ENCODE measurements at regions of chr6 and their contacts with region 1.

Region 1: GRCh38 chr6:99093791-99094190 is 146.0 kb upstream of the FBXL4 start:
- DNase-seq: no peak
- H3K4me3 ChIP-seq: no peak overlapping the region
- H3K4me3 Mint-ChIP-seq: no peak overlapping the region
- H3K27ac Mint-ChIP-seq: no peak overlapping the region
- H3K4me1 ChIP-seq: no peaks in the 10 kb centered on the region
- H3K4me1 Mint-ChIP-seq: no peaks in the 10 kb centered on the region
- H3K27me3 ChIP-seq: no peaks in the 10 kb centered on the region
- H3K27me3 Mint-ChIP-seq: peaks cover 25% of the 10 kb centered on the region
- CTCF ChIP-seq: no peak

Region 2: DNA sequence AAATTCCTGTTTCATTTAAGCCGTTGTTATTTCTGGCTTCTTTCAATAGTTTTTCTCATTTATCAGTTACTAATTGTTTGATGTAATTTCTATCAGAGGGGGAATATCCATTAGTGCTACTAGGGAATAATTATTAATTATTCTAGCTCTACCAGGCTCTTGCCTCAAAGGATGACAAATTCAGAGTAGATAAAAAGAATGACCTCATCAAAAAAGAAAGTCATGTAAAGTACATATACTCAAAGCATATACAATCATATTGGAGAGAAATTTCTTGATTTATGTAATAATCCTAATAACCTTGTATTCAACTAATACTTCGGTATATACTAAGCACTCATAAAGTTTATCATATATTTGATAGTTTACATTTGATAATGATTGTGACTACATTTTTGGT is 46.3 kb before region 1 on chr6:
- CTCF ChIA-PET with region 1: no interaction called
- POLR2A ChIA-PET with region 1: no interaction called
- intact Hi-C with region 1: loop called (anchors 1 kb)
- DNase-seq: no peak
- H3K4me3 ChIP-seq: no peak overlapping the region
- H3K4me3 Mint-ChIP-seq: no peak overlapping the region
- H3K27ac Mint-ChIP-seq: no peak overlapping the region
- H3K4me1 ChIP-seq: no peaks in the 10 kb centered on the region
- H3K4me1 Mint-ChIP-seq: no peaks in the 10 kb centered on the region
- H3K27me3 ChIP-seq: no peaks in the 10 kb centered on the region
- H3K27me3 Mint-ChIP-seq: peaks cover 14% of the 10 kb centered on the region
- CTCF ChIP-seq: no peak